ENCODE measurements at regions of chr19 and their contacts with region 1.

Region 1: GRCh38 chr19:4400135-4400936 is at the start of gene SH3GL1:
- H3K4me3 ChIP-seq: peak within 1 kb of the TSS; percentile 95
- H3K27ac ChIP-seq: peak within 1 kb of the TSS; percentile 84
- H3K4me1 ChIP-seq: no peaks in the 10 kb centered on the region
- CTCF ChIP-seq: peak; percentile 98

Region 2: GRCh38 chr19:4375164-4376027 is 24.9 kb before region 1 on chr19:
- CTCF ChIA-PET with region 1: interaction called, 40 read pairs
- POLR2A ChIA-PET with region 1: interaction called, 19 read pairs
- H3K4me3 ChIP-seq: no peak overlapping the region
- H3K27ac ChIP-seq: no peak overlapping the region; the same call in 1 of the 2 replicates
- H3K4me1 ChIP-seq: peaks cover 9% of the 10 kb centered on the region
- CTCF ChIP-seq: peak; percentile 88

Region 3: DNA sequence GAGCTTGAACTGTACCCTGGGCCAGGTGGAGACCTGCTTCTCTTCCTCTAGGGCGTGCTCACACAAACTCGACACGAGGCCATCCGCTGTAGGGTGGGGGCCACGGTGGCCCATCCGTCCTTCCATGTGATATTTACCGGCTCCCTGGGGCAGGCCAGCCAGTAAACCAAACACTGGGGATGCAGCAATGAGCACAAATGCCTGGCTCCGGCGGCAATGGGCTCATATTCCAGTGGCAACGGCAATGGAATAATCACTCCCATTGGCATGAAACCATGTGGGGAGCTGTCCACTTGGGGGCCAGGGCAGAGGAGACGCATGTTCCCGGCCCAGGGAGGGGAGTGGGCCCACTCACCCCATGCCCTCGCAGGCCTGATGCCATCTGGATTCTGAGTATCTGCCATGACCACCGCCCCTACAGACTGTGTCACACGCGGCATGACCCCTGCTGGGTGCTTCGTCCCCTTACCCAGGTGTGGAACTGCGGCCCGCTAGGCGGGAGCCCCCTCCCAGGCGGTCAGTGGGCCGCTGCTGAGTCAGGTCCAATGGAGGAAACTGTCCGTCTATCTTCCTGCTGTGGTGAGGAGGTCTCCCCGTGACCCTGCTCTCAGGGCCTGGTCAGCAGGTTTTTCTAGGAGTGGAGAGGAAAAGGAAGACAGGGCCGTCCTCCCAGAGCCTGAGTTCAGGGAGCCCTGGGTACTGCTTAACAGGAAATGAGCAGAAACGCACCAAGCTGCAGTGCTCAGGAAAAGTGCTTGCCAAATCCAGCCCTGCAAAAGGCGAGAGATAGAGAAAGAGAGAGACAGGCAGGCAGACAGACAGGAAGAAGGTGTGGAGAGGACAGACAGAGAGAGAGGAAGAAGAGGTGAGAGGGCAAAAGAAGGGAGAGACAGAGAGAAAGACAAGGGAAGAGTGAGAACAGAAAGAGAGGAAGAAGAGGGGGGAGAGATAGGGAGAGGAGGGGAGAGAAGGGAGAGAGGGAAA is 10.5 kb before region 1 on chr19:
- CTCF ChIA-PET with region 1: interaction called, 14 read pairs
- POLR2A ChIA-PET with region 1: interaction called, 6 read pairs
- H3K4me3 ChIP-seq: no peak overlapping the region
- H3K27ac ChIP-seq: peak overlapping the region; percentile 25; the same call in 1 of the 2 replicates
- H3K4me1 ChIP-seq: peaks cover 13% of the 10 kb centered on the region
- CTCF ChIP-seq: no peak

Region 4: GRCh38 chr19:4415352-4415751 is 15.0 kb after region 1 on chr19:
- CTCF ChIA-PET with region 1: interaction called, 27 read pairs
- POLR2A ChIA-PET with region 1: interaction called, 9 read pairs
- H3K4me3 ChIP-seq: no peak overlapping the region
- H3K27ac ChIP-seq: no peak overlapping the region
- H3K4me1 ChIP-seq: peaks cover 15% of the 10 kb centered on the region
- CTCF ChIP-seq: no peak

Measured in HEK293 (cell line).